CD14-positive monocyte (primary cell): ENCODE measurements at regions of chr12 and their contacts with region 1.

Region 1: DNA sequence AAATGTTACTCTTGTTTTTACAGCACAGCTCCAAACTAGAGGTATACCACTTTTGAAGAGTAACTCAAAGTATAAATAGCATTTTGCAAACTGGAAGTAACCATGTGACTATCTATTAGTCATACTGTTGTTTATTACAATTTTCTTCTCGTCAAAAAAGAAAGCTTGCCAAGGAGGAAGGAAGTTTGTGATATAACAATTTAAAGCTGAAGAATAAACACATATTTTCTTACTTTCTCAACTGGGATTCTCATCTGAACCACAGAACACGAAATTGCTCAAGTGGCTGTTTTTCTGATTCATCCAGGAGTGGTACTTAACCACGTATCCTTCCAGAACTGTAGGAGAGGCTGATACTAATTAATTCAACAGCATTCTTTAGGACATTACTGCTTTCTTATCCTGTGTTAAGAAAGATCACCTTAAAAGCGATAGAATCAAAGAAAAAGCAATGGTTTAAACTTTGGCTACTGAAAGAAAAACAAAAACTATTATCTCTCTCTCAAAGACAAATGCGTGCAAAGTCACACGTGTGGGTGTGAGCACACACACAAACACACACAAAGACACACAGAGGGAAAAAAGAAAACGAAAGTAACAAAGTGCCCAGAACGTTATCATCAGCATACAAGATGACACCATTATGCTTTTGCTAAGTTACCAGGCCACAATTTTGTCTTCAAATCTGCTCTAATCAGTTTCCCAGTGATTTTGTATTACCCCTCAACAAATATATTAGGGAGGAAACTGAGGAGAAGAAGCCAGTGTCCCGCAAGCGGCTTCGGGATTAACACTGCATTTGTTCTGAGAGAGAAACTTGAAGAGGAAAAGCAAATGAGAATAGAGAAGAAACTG is at the start of gene CLEC2B:
- DNase-seq: peak; percentile 74 to 85 (median 83)
- H3K4me3 ChIP-seq: peak within 1 kb of the TSS; percentile 81 to 100 (median 83)
- H3K4me3 Mint-ChIP-seq: peak within 1 kb of the TSS; percentile 83 to 91
- H3K27ac ChIP-seq: peak within 1 kb of the TSS; percentile 77 to 94
- H3K27ac Mint-ChIP-seq: peak within 1 kb of the TSS; percentile 95 to 99 (median 96)
- H3K4me1 ChIP-seq: peaks cover 17 to 28% of the 10 kb centered on the region in 2 donors
- H3K4me1 Mint-ChIP-seq: peaks cover 25% of the 10 kb centered on the region
- H3K27me3 ChIP-seq: no peaks in the 10 kb centered on the region
- H3K27me3 Mint-ChIP-seq: no peaks in the 10 kb centered on the region
- CTCF ChIP-seq: no peak
- polyA plus RNA-seq, gene CLEC2B: 52.1 to 80.3 (median 59.4) TPM

Region 2: GRCh38 chr12:9940375-9940774 is 70.8 kb after region 1 on chr12:
- intact Hi-C with region 1: loop called in 1 of 2 experiments (anchors 10 kb)
- DNase-seq: peak in 2 of 3 donors; percentile 50 to 59
- H3K4me3 ChIP-seq: no peak overlapping the region
- H3K4me3 Mint-ChIP-seq: peak overlapping the region in 1 of 2 donors; percentile 69
- H3K27ac ChIP-seq: peak overlapping the region in 1 of 2 donors; percentile 45
- H3K27ac Mint-ChIP-seq: peak overlapping the region in 4 of 7 donors; percentile 39 to 88 (median 82)
- H3K4me1 ChIP-seq: peaks cover 14 to 49% of the 10 kb centered on the region in 2 donors
- H3K4me1 Mint-ChIP-seq: peaks cover 56% of the 10 kb centered on the region
- H3K27me3 ChIP-seq: no peaks in the 10 kb centered on the region
- H3K27me3 Mint-ChIP-seq: peaks cover 0 to 3% (median under 1%) of the 10 kb centered on the region in 3 donors
- CTCF ChIP-seq: peak; percentile 77

Region 3: DNA sequence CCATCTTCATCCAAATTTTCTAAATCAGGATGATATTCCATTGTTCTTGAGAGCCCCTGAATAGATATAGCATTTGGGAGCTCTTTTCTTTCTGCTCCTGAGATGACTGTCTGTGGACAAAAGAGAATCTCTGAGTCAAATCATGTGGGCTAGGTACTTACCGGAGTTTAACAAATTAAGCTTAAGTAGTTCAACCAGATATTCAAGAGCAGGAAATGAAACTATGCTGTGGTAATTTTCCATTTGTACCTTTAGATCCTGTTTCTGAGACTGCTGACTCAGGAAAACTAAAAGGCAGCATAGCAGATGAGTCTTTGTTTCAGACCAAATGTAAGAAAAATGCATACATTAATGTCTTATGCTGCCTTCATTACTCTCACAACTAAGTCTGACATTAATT is 260.5 kb after region 1 on chr12 and contains the start of gene CLEC7A:
- intact Hi-C with region 1: loop called in 1 of 2 experiments (anchors 10 kb)
- DNase-seq: peak; percentile 83 to 96 (median 93)
- H3K4me3 ChIP-seq: peak within 1 kb of the TSS; percentile 85 to 100 (median 89)
- H3K4me3 Mint-ChIP-seq: peak within 1 kb of the TSS; percentile 94 to 95
- H3K27ac ChIP-seq: peak within 1 kb of the TSS; percentile 95 to 97
- H3K27ac Mint-ChIP-seq: peak within 1 kb of the TSS; percentile 97 to 99 (median 98)
- H3K4me1 ChIP-seq: peaks cover 51 to 64% of the 10 kb centered on the region in 2 donors
- H3K4me1 Mint-ChIP-seq: peaks cover 52% of the 10 kb centered on the region
- H3K27me3 ChIP-seq: no peaks in the 10 kb centered on the region
- H3K27me3 Mint-ChIP-seq: no peaks in the 10 kb centered on the region
- CTCF ChIP-seq: no peak
- polyA plus RNA-seq, gene CLEC7A: 235 to 809 (median 304) TPM

Region 4: DNA sequence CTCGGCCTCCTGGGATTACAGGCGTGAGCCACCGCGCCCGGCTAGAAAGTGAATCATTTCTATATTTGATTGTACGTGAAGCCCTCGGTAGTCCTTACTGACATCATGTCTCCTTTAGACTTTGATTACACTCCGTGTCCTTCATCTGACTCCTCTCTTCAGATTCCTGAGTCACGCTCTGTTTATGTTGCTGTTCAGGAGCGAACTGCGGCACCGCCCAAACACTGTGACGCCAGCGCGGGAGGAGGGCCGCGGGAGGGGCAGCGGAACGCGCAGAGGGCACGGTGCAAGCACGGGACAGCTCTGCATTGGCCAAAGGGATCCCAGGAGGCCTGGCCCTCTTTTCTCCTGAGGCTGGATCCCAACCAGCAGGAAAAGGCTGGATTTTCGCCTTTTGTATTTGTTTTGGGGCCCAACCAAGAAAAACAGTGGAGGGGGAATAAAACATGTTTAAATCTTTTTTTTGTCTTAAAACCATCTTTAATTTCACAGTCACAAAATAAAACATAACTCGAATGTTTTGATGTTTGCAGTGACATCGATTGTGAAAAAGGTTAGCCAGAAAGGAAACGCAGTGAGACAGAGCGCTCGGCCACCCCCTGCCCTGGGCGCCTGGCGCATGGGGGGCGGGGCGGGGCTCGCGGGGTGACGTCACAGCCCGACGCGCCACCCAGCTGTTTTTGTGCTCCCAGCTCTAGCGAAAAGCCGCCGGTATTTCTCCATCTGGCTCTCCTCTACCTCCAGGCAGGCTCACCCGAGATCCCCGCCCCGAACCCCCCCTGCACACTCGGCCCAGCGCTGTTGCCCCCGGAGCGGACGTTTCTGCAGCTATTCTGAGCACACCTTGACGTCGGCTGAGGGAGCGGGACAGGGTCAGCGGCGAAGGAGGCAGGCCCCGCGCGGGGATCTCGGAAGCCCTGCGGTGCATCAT is 342.9 kb after region 1 on chr12 and contains the start of gene GABARAPL1:
- intact Hi-C with region 1: loop called in 1 of 2 experiments (anchors 10 kb)
- DNase-seq: peak; percentile 98 to 99 (median 99)
- H3K4me3 ChIP-seq: peak within 1 kb of the TSS; percentile 88 to 95 (median 94)
- H3K4me3 Mint-ChIP-seq: peak within 1 kb of the TSS; percentile 96 to 99
- H3K27ac ChIP-seq: peak within 1 kb of the TSS; percentile 99 to 100
- H3K27ac Mint-ChIP-seq: peak within 1 kb of the TSS; percentile 99 to 100 (median 99)
- H3K4me1 ChIP-seq: peaks cover 18 to 25% of the 10 kb centered on the region in 2 donors
- H3K4me1 Mint-ChIP-seq: peaks cover 17% of the 10 kb centered on the region
- H3K27me3 ChIP-seq: no peaks in the 10 kb centered on the region
- H3K27me3 Mint-ChIP-seq: peaks cover 1 to 6% (median 3%) of the 10 kb centered on the region in 3 donors
- CTCF ChIP-seq: no peak
- polyA plus RNA-seq, gene GABARAPL1: 13.1 to 291 (median 15.5) TPM